HCT116 (cell line): ENCODE measurements at regions of chr2 and their contacts with region 1.

Region 1: DNA sequence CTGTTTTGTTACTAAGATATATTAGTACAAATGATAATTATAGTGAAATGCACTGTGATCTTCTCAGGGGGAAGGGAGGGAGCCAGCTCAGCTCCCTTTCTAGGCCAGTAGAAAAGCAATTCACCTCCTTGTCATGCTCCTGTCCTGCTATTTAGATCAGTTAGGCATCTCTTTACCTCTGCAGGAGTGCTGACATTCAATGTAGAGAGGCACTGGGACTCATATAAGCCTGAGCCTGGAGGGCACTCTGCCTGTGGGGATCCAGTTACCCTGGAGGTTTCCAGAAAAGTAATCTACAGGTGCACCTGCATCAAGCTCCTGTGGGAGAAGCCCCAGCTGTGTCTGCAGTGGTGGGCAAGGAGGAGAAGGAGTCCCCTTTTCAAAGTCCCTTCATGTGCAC is 277.0 kb downstream of the CPS1 start:
- DNase-seq: no peak
- ATAC-seq: no peak
- H3K4me3 ChIP-seq: no peak overlapping the region
- H3K27ac ChIP-seq: no peak overlapping the region
- H3K4me1 ChIP-seq: no peaks in the 10 kb centered on the region
- H3K27me3 ChIP-seq: no peaks in the 10 kb centered on the region
- CTCF ChIP-seq: no peak
- POLR2A ChIP-seq: no peak
- RAD21 ChIP-seq: no peak

Region 2: GRCh38 chr2:211203986-211204385 is 370.6 kb after region 1 on chr2:
- CTCF ChIA-PET with region 1: no interaction called
- POLR2A ChIA-PET with region 1: no interaction called
- RAD21 ChIA-PET with region 1: no interaction called
- intact Hi-C with region 1: loop called (anchors 10 kb)
- DNase-seq: no peak
- ATAC-seq: no peak
- H3K4me3 ChIP-seq: no peak overlapping the region
- H3K27ac ChIP-seq: no peak overlapping the region
- H3K4me1 ChIP-seq: no peaks in the 10 kb centered on the region
- H3K27me3 ChIP-seq: no peaks in the 10 kb centered on the region
- CTCF ChIP-seq: no peak
- POLR2A ChIP-seq: no peak
- RAD21 ChIP-seq: no peak